Ovary (tissue), 10 donors: ENCODE measurements at regions of chr3 and their contacts with region 1.

Region 1: DNA sequence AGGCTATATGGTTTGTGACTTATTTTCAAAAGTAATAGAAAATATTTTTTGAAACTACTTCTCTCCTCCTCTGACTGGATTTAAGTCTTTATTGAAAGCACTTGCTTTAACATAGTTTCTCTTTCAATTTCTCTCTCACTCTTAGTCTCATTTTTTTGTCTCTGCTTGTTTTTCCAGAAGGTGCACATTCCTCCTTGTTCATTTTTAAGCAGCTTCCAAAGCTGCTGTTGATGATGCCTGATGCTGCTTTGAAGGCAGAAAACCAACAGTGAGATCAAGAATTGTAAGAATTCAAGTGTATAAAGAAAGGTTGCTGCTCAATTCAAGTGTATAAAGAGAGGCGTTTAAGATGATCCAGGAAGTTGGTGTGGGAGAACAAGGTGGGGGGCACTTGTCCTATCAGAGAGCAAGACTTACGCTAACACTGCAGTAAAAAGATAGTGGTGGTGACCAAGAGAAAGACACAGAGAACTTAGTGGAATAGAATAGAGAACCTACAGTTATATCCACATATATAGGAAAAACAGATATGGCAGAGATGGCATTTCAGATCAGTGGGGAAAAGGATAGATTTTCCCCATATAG is 12.1 kb downstream of the NR2C2 start:
- DNase-seq: no peak
- H3K4me3 ChIP-seq: no peak overlapping the region
- H3K27ac ChIP-seq: peak overlapping the region in 1 of 2 donors; percentile 47
- H3K4me1 ChIP-seq: peaks cover 11% of the 10 kb centered on the region
- H3K27me3 ChIP-seq: no peaks in the 10 kb centered on the region
- CTCF ChIP-seq: no peak
- EP300 ChIP-seq: no peak
- POLR2A ChIP-seq: no peak

Region 2: GRCh38 chr3:14616606-14617507 is 342.6 kb before region 1 on chr3:
- intact Hi-C with region 1: no loop called
- DNase-seq: no peak
- H3K4me3 ChIP-seq: no peak overlapping the region
- H3K27ac ChIP-seq: no peak overlapping the region
- H3K4me1 ChIP-seq: peaks cover under 1% of the 10 kb centered on the region
- H3K27me3 ChIP-seq: no peaks in the 10 kb centered on the region
- CTCF ChIP-seq: no peak
- EP300 ChIP-seq: no peak
- POLR2A ChIP-seq: no peak

Region 3: DNA sequence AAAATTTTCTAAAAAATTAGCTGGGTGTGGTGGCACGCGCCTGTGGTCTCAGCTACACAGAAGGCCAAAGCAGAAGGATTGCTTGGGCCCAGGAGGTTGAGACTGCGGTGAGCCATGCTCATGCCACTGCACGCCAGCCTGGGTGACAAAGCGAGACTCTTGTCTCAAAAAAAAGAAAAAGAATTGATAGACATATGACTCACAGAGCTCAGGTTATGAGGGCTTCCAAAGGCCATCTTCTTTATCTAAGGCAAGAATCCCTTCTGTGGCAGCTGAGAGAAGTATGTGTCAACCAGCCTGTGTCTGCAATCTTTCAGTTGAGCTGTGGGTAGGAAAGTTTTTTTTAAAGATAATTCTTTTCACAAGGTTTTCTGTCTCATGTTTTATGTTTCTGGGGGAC is 51.7 kb after region 1 on chr3:
- intact Hi-C with region 1: no loop called
- DNase-seq: no peak
- H3K4me3 ChIP-seq: no peak overlapping the region
- H3K27ac ChIP-seq: no peak overlapping the region
- H3K4me1 ChIP-seq: no peaks in the 10 kb centered on the region
- H3K27me3 ChIP-seq: no peaks in the 10 kb centered on the region
- CTCF ChIP-seq: no peak
- EP300 ChIP-seq: no peak
- POLR2A ChIP-seq: no peak

Region 4: DNA sequence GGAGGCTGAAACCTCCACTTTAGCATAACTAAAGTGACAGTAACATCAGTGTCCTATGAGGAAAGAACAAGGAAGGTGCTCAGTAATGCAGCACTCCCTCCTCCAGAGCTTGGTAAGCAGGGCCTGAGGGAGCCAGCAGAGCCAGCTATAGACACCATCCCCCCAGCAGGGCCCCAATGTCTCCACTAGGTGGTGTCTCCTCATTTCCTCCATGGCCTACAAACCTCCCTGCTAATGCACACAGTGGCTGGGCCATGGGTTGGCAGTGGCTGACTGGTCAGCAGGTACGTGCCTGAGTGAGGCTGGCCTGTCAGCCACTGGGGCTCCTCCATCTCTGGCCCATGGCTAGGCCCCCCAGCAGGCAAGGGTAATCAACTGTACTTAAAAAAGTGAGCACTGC is 92.1 kb after region 1 on chr3:
- intact Hi-C with region 1: loop called in 1 of 4 experiments (anchors 10 kb)
- DNase-seq: no peak
- H3K4me3 ChIP-seq: no peak overlapping the region
- H3K27ac ChIP-seq: no peak overlapping the region
- H3K4me1 ChIP-seq: no peaks in the 10 kb centered on the region
- H3K27me3 ChIP-seq: no peaks in the 10 kb centered on the region
- CTCF ChIP-seq: no peak
- EP300 ChIP-seq: no peak
- POLR2A ChIP-seq: no peak

Region 5: DNA sequence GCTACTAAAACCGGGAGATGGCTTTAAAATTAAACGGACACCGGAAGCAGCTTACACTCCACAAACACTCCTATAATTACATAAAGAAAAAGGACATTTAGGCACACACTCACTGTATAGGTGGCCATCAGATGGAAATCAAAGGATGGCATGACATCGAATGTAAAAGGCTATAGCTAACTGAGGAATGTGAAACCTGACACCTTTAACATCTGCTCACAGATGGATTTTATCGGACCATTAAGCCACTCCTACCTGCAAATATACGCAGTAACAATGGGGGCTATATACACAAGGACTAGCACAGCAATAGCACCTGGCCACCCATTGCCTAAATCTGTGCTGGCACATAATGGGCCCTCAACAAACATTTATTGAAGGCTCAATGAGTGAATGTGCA is 154.0 kb after region 1 on chr3:
- intact Hi-C with region 1: no loop called
- DNase-seq: no peak
- H3K4me3 ChIP-seq: no peak overlapping the region
- H3K27ac ChIP-seq: no peak overlapping the region
- H3K4me1 ChIP-seq: no peaks in the 10 kb centered on the region
- H3K27me3 ChIP-seq: no peaks in the 10 kb centered on the region
- CTCF ChIP-seq: no peak
- EP300 ChIP-seq: no peak
- POLR2A ChIP-seq: no peak

Region 6: DNA sequence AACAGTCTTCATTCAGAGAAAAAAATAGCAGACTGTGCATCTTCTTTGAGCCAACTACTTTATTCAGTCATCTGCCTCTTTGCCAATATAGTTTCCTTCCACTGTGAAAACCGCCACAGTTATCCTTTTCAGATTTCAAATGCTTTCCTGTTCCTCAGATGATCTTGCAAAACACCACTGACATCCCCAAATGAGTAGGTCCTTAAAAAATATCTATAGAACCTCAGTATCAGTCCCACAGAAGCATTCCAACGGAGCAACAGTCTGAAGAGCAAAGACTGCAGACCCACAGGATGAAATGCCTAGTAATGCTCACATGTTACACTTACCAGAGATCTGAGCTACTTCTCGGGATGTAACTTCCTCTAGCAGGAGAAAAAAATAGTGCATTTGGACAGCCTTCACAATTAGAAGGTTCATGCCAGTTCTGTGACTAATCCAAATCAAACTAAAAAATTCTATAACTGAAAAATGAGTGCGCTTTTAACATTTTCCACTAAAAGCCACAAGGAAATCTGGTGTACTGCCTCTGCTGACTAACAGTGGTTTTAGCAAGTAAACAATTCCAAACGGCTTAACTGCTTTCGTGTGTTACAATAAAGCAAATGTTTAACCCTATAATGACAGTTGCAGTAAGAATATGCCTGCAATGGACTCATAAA is 838.3 kb after region 1 on chr3 and contains the start of gene ANKRD28:
- intact Hi-C with region 1: no loop called
- DNase-seq: no peak
- H3K4me3 ChIP-seq: peak within 1 kb of the TSS; percentile 38
- H3K27ac ChIP-seq: peak within 1 kb of the TSS; percentile 24 to 55
- H3K4me1 ChIP-seq: peaks cover 4% of the 10 kb centered on the region
- H3K27me3 ChIP-seq: no peaks in the 10 kb centered on the region
- CTCF ChIP-seq: peak in 2 of 3 donors; percentile 19 to 33
- EP300 ChIP-seq: no peak
- POLR2A ChIP-seq: no peak
- total RNA-seq, gene ANKRD28: 39.2 to 79.4 (median 44.7) TPM